Dorsolateral prefrontal cortex (tissue), 120 donors: ENCODE measurements at regions of chr1 and their contacts with region 1.

Region 1: DNA sequence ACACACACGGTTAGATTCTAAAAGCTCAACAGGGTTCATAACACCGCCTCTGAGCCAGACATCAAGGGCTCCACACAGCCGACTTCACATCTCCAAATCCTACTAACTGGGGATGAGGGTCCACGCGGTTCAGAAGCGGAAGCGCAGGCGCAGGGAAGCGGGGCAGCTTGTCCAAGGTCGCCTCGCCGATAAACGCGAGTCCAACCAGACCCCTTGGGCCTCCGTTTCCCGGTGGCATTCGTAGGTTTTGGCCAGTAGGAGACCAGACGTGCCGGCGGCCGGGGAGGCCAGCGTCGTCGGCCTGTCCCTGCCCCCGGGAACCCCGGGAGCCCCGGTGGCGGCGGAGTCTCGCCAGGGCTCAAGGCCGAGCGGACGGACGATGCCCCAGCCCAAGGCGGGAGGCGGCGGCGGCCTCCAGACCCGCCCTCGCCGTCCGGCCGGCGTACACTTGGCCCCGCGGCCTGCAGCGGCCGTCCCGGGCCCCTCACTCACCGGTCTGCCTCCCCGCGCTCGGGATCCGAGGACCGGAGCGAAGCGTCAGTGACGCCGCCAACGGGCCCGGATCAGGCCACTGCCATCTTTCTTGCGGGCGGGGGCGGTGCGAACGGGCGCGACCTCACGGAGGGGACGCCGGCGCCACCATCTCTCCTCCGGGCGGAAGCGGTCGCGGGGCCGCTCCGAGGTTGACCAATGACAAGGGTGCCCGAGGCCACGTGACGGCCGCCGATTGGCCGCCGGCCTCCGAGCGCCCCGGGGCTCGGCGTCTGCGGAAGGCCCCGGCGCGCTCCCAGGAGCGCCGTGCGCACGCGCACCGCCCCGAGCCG is at the start of gene SDF4:
- DNase-seq: peak; percentile 91 to 98 (median 96)
- H3K4me3 ChIP-seq: peak within 1 kb of the TSS; percentile 68 to 100 (median 97)
- H3K27ac ChIP-seq: peak within 1 kb of the TSS; percentile 61 to 98 (median 90)
- H3K27me3 ChIP-seq: no peaks in the 10 kb centered on the region
- CTCF ChIP-seq: peak in 21 of 56 donors; percentile 6 to 32 (median 19)
- total RNA-seq, gene SDF4: 67.7 to 149 (median 98.0) TPM

Region 2: DNA sequence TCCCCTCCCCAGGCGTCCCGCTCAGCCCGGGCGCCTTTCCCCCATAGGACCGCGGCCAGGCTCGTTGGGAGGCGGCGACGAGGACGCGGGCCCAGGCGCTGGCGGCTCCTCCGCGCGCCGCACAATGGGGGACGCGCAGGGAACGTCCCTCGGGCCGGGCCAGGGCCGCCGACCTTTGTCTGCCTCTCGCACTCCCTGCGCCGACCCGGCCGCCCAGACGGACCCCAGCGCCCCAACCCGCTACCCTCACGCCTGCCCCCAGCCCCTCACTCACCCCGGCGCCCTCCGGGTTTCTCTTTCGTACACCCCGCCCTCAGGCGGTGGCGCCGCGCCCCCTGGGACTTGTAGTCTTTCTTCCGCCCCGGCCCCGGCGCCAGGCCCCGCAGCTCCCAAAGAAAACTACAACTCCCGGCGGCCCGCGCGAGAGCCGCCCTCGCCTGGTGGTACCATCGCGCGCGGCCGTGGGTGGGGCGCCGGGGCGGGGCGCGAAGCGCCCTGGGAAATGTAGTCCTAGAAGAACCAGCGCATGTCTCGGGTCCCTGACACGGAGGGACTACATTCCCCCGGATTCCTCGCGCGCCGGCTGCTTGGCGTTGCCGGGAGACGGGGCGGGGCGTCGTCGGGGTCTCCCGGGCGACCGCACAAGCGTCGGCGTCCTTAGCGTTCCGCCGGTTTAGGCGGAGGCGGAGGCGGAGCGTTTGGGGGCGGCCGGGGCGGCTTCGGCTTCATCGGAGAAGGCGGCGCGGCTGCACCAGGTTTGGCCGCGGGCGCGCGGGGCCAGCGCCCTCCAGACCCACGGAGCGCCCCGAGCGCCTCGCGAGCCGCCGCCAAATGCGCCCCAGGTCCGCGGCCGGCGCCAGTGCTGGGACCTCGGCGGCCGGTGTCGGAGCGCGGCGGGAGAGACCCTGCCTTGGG is 115.6 kb before region 1 on chr1 and contains the start of gene C1orf159:
- intact Hi-C with region 1: loop called (anchors 2 to 5 kb)
- DNase-seq: peak; percentile 98 to 100 (median 99)
- H3K4me3 ChIP-seq: peak within 1 kb of the TSS; percentile 60 to 98 (median 87)
- H3K27ac ChIP-seq: peak within 1 kb of the TSS in 55 of 59 donors; percentile 27 to 93 (median 81)
- H3K27me3 ChIP-seq: no peaks in the 10 kb centered on the region
- CTCF ChIP-seq: peak in 38 of 56 donors; percentile 8 to 61 (median 34)
- total RNA-seq, gene C1orf159: 14.3 to 35.0 (median 23.4) TPM

Region 3: DNA sequence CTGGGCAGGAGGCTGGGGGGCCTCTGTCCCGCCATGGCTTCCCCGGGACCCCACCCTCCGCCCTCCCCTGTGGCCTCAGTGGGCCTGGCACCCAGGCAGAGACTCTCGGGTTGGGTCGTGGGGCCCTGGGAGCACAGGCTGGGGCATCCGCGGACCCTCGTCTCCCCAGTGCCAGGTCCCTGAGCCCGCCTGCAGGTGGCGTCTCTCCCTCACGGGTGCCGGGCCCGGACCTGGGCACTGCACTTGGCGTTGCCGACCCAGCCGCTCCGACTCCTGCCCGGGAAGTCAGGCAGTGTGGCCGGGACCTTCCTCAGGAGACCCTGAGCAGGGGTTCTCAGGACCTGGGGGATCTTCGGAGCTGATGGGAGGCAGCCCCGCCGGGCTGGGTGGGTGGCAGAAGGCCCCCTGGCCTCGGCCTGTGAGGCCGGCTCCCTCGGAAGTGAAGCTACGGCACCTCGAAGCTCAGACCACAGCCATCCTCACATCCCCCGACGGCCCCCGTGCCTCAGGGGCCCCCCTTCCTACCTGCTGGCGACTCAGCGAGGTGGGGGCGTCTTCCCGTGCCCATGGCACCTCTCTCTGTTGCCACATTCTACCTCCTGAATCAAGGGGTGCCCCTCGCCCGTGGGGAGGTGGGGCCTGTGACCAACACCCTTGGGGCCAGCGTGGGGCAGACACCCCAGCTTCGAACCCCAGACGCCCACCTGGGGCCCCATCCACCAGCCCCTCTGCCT is 109.4 kb before region 1 on chr1:
- intact Hi-C with region 1: loop called (anchors 2 to 5 kb)
- DNase-seq: peak; percentile 69 to 89 (median 78)
- H3K4me3 ChIP-seq: peak overlapping the region in 52 of 59 donors; percentile 1 to 59 (median 32)
- H3K27ac ChIP-seq: peak overlapping the region in 19 of 59 donors; percentile 6 to 67 (median 51)
- H3K27me3 ChIP-seq: no peaks in the 10 kb centered on the region
- CTCF ChIP-seq: peak; percentile 39 to 98 (median 91)

Region 4: GRCh38 chr1:1157914-1158710 is 73.5 kb before region 1 on chr1:
- intact Hi-C with region 1: loop called in 1 of 2 experiments (anchors 2 kb)
- DNase-seq: peak; percentile 38 to 84 (median 76)
- H3K4me3 ChIP-seq: peak overlapping the region; percentile 51 to 96 (median 75)
- H3K27ac ChIP-seq: peak overlapping the region; percentile 87 to 100 (median 98)
- H3K27me3 ChIP-seq: peaks cover 0 to 20% (median 0%) of the 10 kb centered on the region in 45 donors
- CTCF ChIP-seq: peak in 8 of 56 donors; percentile 7 to 24 (median 14)

Region 5: GRCh38 chr1:1273512-1274298 is 42.1 kb after region 1 on chr1 and contains the start of gene UBE2J2:
- intact Hi-C with region 1: loop called (anchors 2 kb)
- DNase-seq: peak; percentile 84 to 95 (median 93)
- H3K4me3 ChIP-seq: peak within 1 kb of the TSS; percentile 72 to 100 (median 94)
- H3K27ac ChIP-seq: peak within 1 kb of the TSS in 57 of 59 donors; percentile 29 to 95 (median 87)
- H3K27me3 ChIP-seq: no peaks in the 10 kb centered on the region
- CTCF ChIP-seq: peak in 47 of 56 donors; percentile 15 to 68 (median 43)
- total RNA-seq, gene UBE2J2: 37.3 to 87.4 (median 51.0) TPM